ENCODE measurements at regions of chrX and their contacts with region 1.

Region 1: DNA sequence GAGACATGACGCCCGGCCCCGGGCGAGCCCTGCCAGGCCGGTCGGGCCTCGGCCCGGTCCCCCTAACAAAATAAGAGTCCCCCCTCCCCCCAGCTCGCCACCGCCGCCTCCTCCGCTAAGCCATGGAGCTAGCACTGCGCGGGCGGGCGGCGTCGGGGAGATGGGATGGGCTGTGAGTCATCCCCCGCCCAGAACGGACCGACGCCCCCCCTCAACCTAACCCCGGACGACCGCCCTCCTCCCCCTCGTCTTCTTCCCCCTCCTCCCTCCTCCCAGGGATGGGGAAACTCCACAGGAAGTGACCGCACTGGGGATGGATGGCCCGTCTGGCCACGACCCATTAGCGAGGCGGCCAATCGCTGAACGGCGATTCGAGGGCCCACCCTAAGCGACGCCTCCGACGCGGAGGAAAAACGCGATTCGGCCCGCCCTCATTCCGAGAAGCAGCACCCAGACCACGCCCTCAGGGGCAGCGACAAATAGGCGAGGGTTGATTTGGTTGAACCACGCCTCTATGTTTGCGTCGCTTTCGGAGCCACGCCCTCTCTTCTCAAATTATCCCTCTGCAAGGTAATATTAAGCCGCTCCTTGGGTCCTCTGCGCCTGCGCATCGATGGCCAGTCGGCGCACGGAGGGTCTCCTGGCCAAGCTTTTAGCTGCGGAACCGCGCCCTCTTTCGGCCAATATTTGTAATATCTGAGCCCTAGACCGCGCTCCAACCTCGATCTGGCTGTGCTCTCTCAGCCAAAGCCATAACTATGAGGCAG is at the start of gene TFE3:
- DNase-seq: peak; percentile 98
- H3K4me3 Mint-ChIP-seq: peak within 1 kb of the TSS; percentile 93
- H3K27ac Mint-ChIP-seq: peak within 1 kb of the TSS; percentile 94
- H3K4me1 Mint-ChIP-seq: peaks cover 28% of the 10 kb centered on the region
- H3K27me3 Mint-ChIP-seq: no peaks in the 10 kb centered on the region
- total RNA-seq, gene TFE3: 34.7 to 35.5 TPM

Region 2: DNA sequence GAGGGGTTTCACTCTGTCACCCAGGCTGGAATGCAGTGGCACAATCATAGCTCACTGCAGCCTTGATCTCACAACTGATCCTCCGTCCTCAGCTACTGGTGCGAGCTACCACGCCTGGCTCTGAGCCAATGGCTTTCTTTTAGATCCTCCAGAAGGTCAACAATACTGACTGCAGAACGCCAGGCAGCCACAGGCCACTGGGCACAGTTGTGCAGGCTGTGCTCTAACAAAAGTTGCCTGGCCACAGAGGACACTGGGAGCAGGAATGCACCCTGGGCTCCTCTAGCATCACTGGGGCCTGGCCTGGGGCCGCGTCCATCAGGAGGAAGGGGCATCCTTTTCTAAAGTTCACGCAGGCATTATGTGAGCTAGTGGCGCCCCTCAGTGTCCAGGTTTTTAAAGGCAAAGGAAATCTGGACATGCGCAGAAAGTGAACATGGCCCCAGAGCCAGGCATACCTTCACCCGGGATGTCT is 549.5 kb before region 1 on chrX:
- CTCF ChIA-PET with region 1: no interaction called
- intact Hi-C with region 1: no loop called
- DNase-seq: peak; percentile 30
- H3K4me3 Mint-ChIP-seq: no peak overlapping the region
- H3K27ac Mint-ChIP-seq: no peak overlapping the region
- H3K4me1 Mint-ChIP-seq: no peaks in the 10 kb centered on the region
- H3K27me3 Mint-ChIP-seq: no peaks in the 10 kb centered on the region

Region 3: GRCh38 chrX:48696301-48697181 is 346.9 kb before region 1 on chrX and contains the start of gene SUV39H1:
- CTCF ChIA-PET with region 1: no interaction called
- intact Hi-C with region 1: loop called (anchors 5 kb)
- DNase-seq: peak; percentile 87
- H3K4me3 Mint-ChIP-seq: peak within 1 kb of the TSS; percentile 89
- H3K27ac Mint-ChIP-seq: peak within 1 kb of the TSS; percentile 91
- H3K4me1 Mint-ChIP-seq: peaks cover 36% of the 10 kb centered on the region
- H3K27me3 Mint-ChIP-seq: no peaks in the 10 kb centered on the region
- total RNA-seq, gene SUV39H1: 31.5 to 31.9 TPM

Region 4: DNA sequence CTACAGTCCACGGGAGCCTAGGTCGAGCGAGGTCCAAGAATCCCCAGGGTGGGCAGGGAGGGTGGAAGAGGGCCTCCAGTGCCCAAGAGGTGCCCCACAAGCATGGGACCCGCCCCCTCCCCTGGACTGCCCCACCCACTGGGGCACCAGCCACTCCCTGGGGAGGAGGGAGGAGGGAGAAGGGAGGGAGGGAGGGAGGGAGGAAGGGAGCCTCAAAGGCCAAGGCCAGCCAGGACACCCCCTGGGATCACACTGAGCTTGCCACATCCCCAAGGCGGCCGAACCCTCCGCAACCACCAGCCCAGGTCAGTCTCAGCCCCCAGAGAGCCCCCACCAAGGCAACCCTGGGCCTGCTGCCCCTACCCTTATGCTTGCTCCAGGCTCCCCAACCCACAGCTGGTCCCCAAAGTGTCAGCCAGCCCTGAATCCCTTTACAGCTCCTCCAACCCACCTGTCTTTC is 257.0 kb before region 1 on chrX and contains the start of gene GATA1:
- CTCF ChIA-PET with region 1: no interaction called
- intact Hi-C with region 1: no loop called
- DNase-seq: no peak
- H3K4me3 Mint-ChIP-seq: no peak within 1 kb of the TSS
- H3K27ac Mint-ChIP-seq: no peak within 1 kb of the TSS
- H3K4me1 Mint-ChIP-seq: peaks cover 10% of the 10 kb centered on the region
- H3K27me3 Mint-ChIP-seq: peaks cover 1% of the 10 kb centered on the region
- total RNA-seq, gene GATA1: not detected

Region 5: DNA sequence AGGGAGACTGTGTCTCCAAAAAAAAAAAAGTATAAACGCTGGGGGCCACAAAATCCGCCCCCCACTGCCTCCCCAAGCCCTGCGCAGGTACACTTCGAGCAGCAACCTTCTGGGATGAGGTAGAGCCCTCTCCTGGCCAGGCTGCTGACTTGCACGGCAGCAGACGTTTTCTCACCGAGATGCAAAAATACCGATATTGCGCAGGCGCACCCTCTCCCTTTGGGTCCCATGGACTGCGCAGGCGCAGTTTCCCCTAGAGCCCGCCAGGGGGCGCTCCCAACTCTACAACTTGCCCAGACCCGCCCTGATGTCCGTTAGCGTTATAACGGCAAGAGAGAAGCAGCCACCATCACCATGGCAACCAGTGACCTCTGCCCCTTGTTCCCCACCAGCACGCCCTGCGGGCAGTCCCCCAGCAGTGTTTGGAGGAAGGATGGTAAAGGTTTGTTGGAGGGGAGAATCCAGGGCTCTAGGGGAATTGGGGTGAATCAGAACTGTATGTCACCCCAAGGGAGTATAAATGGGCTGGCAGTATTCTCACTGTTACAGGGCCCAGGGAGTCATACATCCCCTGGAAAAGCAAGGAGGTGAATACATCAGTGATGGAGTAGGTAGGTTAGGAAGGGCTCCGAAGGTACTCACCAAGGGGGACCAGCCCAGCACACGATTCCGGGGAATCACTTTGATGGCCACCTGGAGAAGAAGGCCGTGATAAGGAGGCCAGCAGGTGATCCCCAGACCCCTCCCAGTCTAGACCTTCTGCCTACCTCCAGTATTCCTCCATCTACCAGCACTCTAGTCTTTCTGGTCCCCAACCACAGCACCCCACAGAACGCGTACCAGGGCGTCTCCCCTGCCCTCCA is 126.0 kb before region 1 on chrX:
- CTCF ChIA-PET with region 1: no interaction called
- intact Hi-C with region 1: loop called (anchors 1 kb)
- DNase-seq: peak; percentile 92
- H3K4me3 Mint-ChIP-seq: peak overlapping the region; percentile 95
- H3K27ac Mint-ChIP-seq: peak overlapping the region; percentile 99
- H3K4me1 Mint-ChIP-seq: peaks cover 39% of the 10 kb centered on the region
- H3K27me3 Mint-ChIP-seq: peaks cover 2% of the 10 kb centered on the region

Region 6: DNA sequence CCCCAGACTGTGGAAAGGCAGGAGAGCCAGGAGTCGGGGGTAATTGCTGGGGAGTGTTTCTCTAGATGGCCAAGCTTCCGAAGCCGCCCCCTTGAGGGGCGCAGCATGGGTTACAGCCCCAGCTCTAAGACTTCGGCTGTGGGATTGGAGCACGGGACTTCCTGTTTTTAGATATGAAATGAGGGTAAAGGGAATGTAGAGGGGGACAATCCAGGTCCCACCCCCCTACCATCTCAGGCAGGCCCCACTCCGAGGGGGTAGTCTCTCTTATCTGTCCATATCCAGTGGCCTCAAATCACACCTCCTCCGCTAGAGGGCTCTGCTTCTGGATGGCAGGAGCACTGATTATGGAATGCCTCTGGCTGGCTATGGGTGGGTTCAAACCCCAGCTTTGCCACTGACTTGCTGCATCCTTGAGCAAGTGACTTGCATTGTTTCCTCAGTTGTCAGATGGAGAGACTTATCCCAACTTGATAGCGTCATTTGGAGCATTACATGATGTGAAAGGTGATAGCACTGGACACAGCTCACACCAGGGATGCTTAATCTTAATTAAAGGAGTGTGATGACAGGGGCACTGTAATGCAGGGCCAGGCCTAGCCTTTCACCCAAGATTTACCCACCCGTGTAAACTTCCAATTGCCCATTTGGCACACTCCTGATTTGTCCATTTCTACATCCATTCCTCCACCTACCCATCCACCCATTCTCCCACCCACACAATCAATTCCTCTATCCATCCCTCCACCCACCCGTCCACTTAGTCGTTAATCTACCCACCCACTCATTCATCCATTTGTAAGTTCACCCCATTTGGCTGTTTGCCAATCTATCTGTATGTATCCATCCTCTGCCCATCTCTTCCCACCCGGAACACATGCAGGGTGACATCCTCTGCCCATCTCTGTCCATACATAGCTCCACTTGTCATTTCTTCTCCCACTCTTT is 70.9 kb before region 1 on chrX:
- CTCF ChIA-PET with region 1: interaction called, 4 read pairs
- intact Hi-C with region 1: loop called (anchors 1 kb)
- DNase-seq: peak; percentile 51
- H3K4me3 Mint-ChIP-seq: peak overlapping the region; percentile 42
- H3K27ac Mint-ChIP-seq: no peak overlapping the region
- H3K4me1 Mint-ChIP-seq: peaks cover 13% of the 10 kb centered on the region
- H3K27me3 Mint-ChIP-seq: no peaks in the 10 kb centered on the region

Region 7: DNA sequence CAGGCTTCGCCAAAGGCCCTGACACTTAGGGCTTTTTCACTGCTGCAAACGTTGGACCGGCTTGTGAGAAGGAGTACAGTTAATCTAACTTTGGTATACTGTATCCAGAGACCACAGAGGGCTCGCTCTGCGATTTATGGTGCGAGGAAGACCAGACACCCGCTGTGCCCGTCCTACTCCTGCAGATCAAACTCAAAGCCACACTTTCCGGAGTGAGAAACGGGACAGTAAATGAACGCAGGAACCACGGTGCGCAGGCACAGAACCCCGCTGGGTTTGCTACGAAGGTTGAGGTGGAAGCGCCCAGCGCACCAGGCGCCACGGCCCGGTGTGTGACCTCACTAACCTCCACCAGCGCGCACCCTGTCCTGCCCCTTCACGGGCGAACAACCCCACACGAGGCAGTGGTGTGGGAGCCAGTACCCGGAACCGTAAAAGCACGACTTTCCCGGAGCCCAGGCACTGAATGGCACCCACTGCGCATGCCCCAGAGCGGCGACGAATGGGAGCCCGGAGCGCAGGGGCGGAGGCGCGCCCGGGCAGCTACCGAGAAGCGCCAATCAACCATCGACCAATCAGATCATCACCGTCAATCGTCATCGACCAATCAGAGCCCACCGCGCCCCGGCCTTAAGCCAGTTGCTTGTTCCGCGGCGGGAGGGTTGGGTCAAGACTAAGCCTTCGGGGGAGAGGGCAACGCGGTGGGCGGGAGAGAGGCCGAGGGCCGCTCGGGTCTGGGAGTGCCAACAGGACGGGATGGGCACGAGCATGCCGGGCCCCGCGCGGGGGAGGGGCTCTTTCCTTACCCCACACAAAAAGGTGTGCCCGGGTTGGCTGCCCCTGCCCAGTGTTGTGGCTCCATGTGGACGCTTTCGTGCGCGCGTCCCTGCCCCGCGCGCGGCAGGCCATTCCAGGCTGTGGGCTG is 57.6 kb after region 1 on chrX:
- CTCF ChIA-PET with region 1: no interaction called
- intact Hi-C with region 1: loop called (anchors 2 kb)
- DNase-seq: peak; percentile 90
- H3K4me3 Mint-ChIP-seq: peak overlapping the region; percentile 90
- H3K27ac Mint-ChIP-seq: peak overlapping the region; percentile 89
- H3K4me1 Mint-ChIP-seq: peaks cover 8% of the 10 kb centered on the region
- H3K27me3 Mint-ChIP-seq: no peaks in the 10 kb centered on the region

Region 8: DNA sequence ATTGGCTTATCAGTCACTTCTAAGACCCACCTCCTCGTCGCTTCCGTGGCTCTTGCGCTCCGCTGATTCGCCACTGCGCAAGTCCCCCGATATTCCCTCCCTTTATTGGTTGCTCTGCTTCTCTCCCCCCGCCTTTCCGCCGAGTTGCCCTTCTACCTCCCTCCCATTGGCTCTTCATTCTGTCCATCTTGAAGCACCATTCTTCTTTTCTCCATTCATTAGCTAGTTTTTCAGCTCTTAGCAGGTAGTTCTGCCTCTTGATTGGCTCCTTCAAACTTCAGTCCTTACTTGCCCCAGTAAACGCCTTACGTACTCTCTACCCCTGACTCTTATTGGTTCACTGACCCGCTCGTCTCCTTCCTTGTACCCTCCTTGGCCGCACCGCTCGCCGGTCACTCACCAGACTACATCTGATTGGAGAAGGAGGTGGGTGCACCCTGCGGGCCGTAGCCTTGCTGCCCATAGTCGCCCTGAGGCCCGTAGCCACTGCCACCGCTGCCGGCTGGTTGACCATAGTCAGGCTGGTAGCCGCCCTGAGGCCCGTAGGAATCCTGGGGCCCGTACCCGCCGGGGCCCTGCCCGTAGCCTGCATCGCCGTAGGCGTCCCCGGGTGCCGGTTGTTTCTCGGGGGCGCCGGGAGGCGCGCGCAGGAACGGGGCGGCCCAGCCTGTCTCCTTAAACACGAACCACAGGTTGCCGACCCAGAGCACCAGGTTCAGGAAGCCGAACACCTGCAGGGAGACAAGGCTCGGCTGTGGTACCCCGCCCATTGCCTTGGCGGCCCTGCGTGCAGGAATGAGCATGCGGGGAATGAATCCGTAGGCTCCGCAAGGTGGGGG is 147.8 kb after region 1 on chrX:
- CTCF ChIA-PET with region 1: no interaction called
- intact Hi-C with region 1: loop called (anchors 1 kb)
- DNase-seq: peak; percentile 89
- H3K4me3 Mint-ChIP-seq: peak overlapping the region; percentile 97
- H3K27ac Mint-ChIP-seq: peak overlapping the region; percentile 94
- H3K4me1 Mint-ChIP-seq: peaks cover 25% of the 10 kb centered on the region
- H3K27me3 Mint-ChIP-seq: no peaks in the 10 kb centered on the region

Measured in activated naive CD4-positive, alpha-beta T cell treated with anti-CD3 and anti-CD28 coated beads for 36 hours (primary cell).